K562 (cell line): ENCODE measurements at regions of chr3 and their contacts with region 1.

Region 1: GRCh38 chr3:156816800-156817645 is 9.1 kb upstream of the LEKR1 start:
- DNase-seq: peak; percentile 58 to 80 (median 64)
- ATAC-seq: peak; percentile 85
- H3K4me3 ChIP-seq: peak overlapping the region; percentile 37
- H3K27ac ChIP-seq: peak overlapping the region; percentile 66
- H3K4me1 ChIP-seq: peaks cover 14 to 22% of the 10 kb centered on the region in 2 experiments
- H3K27me3 ChIP-seq: no peaks in the 10 kb centered on the region
- CTCF ChIP-seq: peak; percentile 15 to 16 (median 15); a peak in 1 of 6 replicates
- EP300 ChIP-seq: no peak
- POLR2A ChIP-seq: 0 out of 2 replicates have a peak, but pooled peaks have one; percentile 49
- RAD21 ChIP-seq: no peak

Region 2: GRCh38 chr3:156664831-156665178 is 152.2 kb before region 1 on chr3:
- CTCF ChIA-PET with region 1: no interaction called
- POLR2A ChIA-PET with region 1: no interaction called
- in situ Hi-C with region 1: no loop called
- intact Hi-C with region 1: no loop called
- DNase-seq: no peak
- ATAC-seq: no peak
- H3K4me3 ChIP-seq: no peak overlapping the region
- H3K27ac ChIP-seq: no peak overlapping the region
- H3K4me1 ChIP-seq: peaks cover 3 to 30% of the 10 kb centered on the region in 2 experiments; a peak in 4 of 5 replicates
- H3K27me3 ChIP-seq: no peaks in the 10 kb centered on the region
- CTCF ChIP-seq: no peak
- EP300 ChIP-seq: no peak
- POLR2A ChIP-seq: no peak
- RAD21 ChIP-seq: no peak

Region 3: GRCh38 chr3:156681002-156681401 is 136.0 kb before region 1 on chr3:
- CTCF ChIA-PET with region 1: no interaction called
- POLR2A ChIA-PET with region 1: interaction called, 3 read pairs
- in situ Hi-C with region 1: no loop called
- intact Hi-C with region 1: loop called (anchors 5 kb)
- DNase-seq: peak in 1 of 4 experiments; percentile 53
- ATAC-seq: peak; percentile 53; the same call in 2 of the 3 replicates
- H3K4me3 ChIP-seq: no peak overlapping the region
- H3K27ac ChIP-seq: no peak overlapping the region
- H3K4me1 ChIP-seq: peaks cover 6 to 53% of the 10 kb centered on the region in 2 experiments; a peak in 3 of 5 replicates
- H3K27me3 ChIP-seq: no peaks in the 10 kb centered on the region
- CTCF ChIP-seq: no peak
- EP300 ChIP-seq: no peak
- POLR2A ChIP-seq: no peak
- RAD21 ChIP-seq: peak in 1 of 2 experiments; percentile 11; a peak in 1 of 4 replicates